ENCODE measurements at regions of chr12 and their contacts with region 1.

Region 1: DNA sequence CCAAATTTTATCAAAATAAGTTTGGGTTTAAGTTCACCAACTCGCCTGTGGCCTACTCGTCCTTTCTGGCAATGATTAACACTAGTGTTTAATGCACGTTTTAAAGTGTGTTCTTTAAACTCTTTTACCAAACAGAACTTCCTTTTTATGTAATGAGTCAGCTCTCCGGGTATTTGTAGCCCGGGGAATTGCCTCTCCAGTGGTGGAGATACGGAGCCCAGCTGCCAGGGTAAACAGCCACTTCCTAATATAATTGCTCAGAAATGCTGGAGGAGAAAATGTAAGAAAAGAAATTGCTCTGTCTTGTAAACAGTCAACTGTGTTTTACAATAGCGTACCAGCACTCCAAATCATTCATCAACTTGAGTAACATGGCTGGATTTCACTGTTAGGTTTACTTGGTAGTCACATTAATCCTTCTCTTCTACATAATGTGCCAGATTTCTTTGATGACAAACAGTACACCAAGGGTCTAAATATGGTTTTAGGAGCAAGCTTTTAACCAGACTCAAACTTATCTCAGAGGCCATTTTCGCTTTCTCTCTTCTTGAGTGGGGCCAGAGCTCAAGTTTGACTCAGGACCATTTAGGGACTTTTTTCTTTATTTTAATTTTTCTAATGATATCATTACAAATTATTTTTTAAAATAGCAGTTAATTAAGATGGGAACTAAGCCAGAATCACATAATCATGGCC is 101.2 kb upstream of the SLC38A2 start:
- DNase-seq: peak; percentile 76
- H3K4me3 ChIP-seq: no peak overlapping the region
- H3K27ac ChIP-seq: peak overlapping the region; percentile 54 to 63
- H3K4me1 ChIP-seq: no peaks in the 10 kb centered on the region
- H3K27me3 ChIP-seq: no peaks in the 10 kb centered on the region
- CTCF ChIP-seq: no peak
- POLR2A ChIP-seq: no peak

Region 2: DNA sequence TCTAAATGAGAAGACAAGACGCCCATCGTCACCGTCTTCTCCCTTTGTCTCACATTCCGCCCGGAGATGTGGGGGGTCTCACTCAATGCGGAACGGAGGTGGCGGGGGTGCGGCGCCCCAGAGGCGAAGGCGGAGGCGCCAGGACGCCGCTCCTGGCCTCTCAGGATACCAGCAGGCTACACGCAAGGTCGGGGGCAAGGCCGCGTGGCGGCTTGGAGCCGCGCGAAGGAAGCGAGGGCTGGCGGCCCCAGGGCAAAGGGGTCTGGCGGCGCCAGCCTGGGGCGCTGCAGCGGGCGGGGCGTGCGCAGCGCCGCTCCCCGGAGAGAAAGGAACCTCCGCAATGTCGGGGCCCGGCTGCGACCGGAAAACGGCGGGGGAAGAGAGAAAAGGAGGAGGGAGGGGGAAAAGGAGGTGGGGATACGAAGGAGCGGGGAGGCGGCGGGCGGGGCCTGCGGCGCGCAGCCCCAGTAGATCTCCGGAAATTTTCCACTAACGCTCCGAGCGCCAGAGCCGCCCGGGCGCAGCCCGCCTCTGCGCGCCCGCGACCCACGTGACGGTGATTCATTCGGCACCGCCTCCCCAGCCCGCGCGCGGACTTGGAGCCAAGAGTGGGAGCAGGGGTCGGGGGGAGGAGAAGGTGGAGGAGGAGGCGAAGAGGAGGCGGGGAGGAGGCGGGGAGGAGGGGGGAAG is 90.7 kb before region 1 on chr12:
- intact Hi-C with region 1: loop called (anchors 5 kb)
- DNase-seq: peak; percentile 97
- H3K4me3 ChIP-seq: peak overlapping the region; percentile 74 to 84
- H3K27ac ChIP-seq: peak overlapping the region; percentile 99
- H3K4me1 ChIP-seq: peaks cover 5% of the 10 kb centered on the region
- H3K27me3 ChIP-seq: no peaks in the 10 kb centered on the region
- CTCF ChIP-seq: peak in 3 of 4 experiments; percentile 29 to 55 (median 49)
- POLR2A ChIP-seq: peak; percentile 96